ENCODE measurements at regions of chrX and their contacts with region 1.

Region 1: GRCh38 chrX:54044126-54044876 is at the start of gene PHF8:
- DNase-seq: peak; percentile 91
- H3K4me3 Mint-ChIP-seq: peak within 1 kb of the TSS; percentile 92
- H3K27ac Mint-ChIP-seq: peak within 1 kb of the TSS; percentile 98
- H3K4me1 Mint-ChIP-seq: peaks cover 18% of the 10 kb centered on the region
- H3K27me3 Mint-ChIP-seq: no peaks in the 10 kb centered on the region
- total RNA-seq, gene PHF8: 50.7 and 54.8 TPM in 2 replicates

Region 2: GRCh38 chrX:53422086-53422860 is 622.0 kb before region 1 on chrX and contains the start of gene SMC1A:
- intact Hi-C with region 1: loop called (anchors 1 kb)
- DNase-seq: peak; percentile 93
- H3K4me3 Mint-ChIP-seq: peak within 1 kb of the TSS; percentile 97
- H3K27ac Mint-ChIP-seq: peak within 1 kb of the TSS; percentile 95
- H3K4me1 Mint-ChIP-seq: peaks cover 35% of the 10 kb centered on the region
- H3K27me3 Mint-ChIP-seq: no peaks in the 10 kb centered on the region
- total RNA-seq, gene SMC1A: 122 and 138 TPM in 2 replicates

Region 3: DNA sequence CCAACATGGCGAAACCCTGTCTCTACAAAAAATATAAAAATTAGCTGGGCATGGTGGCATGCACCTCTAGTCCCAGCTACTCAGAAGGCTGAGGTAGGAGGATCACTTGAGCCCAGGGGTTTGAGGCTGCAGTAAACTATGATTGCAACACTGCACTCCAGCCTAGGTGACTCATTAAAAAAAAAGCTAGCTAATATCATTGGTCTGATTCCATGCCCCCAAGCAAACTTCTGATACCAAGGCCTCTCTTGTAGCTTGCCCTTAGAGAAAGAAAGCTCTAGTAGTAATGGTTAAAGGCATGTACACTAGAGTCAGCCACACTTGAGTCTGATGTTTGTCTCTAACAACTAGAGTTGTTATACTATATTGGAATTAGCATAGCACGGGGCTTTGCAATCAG is 32.6 kb after region 1 on chrX:
- intact Hi-C with region 1: no loop called
- DNase-seq: no peak
- H3K4me3 Mint-ChIP-seq: no peak overlapping the region
- H3K27ac Mint-ChIP-seq: no peak overlapping the region
- H3K4me1 Mint-ChIP-seq: no peaks in the 10 kb centered on the region
- H3K27me3 Mint-ChIP-seq: no peaks in the 10 kb centered on the region

Region 4: DNA sequence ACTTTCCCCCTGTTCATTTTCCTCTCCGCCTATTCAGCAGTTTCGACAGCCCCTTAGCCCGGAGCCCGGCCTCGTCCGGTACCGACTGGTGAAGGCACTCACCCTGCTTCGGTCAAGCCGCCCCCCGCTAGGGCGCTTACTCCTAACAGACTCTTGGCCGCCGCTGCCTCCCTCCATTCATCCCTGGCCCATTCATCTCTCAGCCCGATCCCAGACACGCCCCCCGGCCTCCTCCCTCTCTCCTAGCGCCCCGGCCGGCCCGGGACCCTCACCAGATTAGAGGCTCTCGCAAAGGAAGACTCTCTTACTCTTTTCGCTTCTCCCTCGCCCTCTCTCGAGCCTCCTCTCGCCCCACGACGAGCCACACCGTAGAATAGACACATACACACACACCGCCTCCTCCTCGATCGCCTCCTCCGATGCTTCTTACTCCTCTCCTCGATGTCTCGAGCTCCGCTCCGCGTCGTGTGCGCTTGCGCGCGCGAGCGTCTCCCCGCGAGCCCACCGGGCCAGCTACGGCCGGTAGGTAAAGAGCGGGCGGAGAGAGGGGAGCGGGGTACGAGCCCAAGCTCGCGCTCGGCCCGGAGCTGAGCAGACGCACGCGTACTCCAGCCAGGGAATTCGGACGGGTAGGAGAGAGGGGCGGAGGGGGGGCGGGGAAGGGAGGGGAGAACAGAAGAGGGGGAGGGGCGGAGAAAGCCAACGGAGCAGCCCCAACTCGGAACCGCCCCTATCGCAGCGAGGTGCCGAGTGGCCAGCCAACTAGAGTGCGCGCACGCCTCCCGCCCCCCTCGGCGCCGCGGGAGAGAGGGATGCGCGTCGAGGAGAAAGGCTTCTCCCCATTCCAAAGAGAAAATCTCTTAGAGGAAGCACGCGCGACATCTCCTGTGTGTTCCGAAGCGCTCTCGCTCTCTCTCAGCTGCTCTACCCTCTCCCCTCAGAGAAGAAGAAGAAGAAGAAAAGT is 313.4 kb after region 1 on chrX and contains the start of gene WNK3:
- intact Hi-C with region 1: loop called (anchors 10 kb)
- DNase-seq: peak; percentile 1
- H3K4me3 Mint-ChIP-seq: peak within 1 kb of the TSS; percentile 83
- H3K27ac Mint-ChIP-seq: no peak within 1 kb of the TSS
- H3K4me1 Mint-ChIP-seq: peaks cover 13% of the 10 kb centered on the region
- H3K27me3 Mint-ChIP-seq: peaks cover 36% of the 10 kb centered on the region
- total RNA-seq, gene WNK3: 0.02 and 0.16 TPM in 2 replicates

Region 5: DNA sequence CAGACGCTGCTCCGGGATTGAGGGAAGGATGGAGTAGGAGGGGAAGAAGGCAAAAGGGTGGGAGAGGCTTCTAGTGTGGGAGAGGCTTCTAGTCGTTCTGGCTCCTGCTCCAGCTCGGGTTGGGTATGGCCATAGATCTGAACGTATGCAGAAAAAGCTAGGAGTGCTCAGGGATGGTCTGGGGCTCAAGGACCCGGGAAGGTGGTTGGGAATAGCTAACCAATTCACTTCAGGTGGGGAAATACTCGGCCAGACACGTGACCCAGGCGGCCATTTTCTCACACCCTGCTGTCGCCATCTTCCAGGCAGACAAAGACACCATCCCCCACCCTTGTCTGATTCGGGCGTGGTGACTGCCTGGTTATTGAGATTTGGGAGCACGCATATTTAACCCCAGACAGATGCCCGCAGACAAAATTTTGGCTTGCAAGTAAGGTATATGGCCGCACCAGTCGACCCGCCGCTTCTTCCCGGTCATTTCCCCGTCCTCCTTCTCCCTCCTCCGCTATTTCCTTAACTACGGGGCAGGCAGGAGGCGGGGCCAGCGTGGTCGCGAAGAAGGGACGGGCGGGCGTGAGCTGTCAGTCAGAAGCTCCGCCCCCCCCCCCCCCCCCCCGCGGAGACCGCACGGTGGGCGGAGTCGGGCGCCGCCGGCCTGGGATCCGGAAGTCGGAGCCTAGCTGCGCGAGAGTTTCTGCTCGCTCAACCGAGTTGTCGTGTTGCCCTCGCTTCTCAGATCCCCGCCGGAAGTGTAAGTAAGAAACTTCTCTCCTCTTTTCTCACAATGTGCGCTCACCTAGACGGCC is 485.5 kb after region 1 on chrX and contains the start of gene GNL3L:
- intact Hi-C with region 1: loop called (anchors 1 kb)
- DNase-seq: peak; percentile 69
- H3K4me3 Mint-ChIP-seq: peak within 1 kb of the TSS; percentile 95
- H3K27ac Mint-ChIP-seq: peak within 1 kb of the TSS; percentile 94
- H3K4me1 Mint-ChIP-seq: peaks cover 26% of the 10 kb centered on the region
- H3K27me3 Mint-ChIP-seq: no peaks in the 10 kb centered on the region
- total RNA-seq, gene GNL3L: 75.5 and 76.1 TPM in 2 replicates

Region 6: DNA sequence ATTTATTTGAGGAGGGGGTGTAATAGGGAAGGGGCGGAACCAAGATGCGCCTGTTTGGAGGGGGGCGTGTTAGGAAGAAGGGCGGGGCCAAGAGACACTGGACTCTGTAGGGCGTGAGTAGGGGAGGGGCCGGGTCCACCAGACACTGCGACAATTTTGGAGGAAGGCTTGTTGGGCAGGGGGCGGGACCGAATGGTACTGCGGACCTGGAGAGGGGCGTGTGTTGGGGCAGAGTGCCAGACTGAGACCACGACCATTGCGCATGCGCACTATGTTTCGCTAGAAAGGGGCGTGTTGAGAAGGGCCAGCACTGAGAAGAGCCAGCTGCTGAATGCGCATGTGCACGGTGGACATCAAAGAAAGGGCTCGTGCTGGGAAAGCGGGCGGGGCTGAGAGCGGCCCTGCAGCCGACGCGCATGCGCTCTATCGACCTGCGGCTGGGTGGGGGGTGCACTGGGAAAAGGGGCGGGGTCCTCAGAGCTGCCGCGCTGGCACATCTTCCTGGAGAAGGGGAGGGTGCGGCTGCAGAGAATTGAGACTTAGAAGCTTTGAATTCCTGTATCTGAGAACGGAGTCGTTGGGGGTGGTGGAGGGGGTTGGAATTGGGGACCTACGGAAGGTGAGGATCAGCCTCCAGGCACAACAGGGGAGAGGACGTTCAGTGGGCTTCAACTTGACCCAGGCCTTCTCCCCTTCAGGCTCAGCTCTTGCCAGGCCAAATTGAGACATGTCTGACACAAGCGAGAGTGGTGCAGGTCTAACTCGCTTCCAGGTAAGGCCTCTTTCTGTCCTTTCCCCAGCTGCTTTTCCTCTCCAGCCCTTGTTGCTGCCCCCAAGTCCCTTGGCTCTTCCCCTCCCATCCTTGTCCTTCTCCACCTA is 764.5 kb after region 1 on chrX:
- intact Hi-C with region 1: loop called (anchors 2 kb)
- DNase-seq: peak; percentile 88
- H3K4me3 Mint-ChIP-seq: peak overlapping the region; percentile 89
- H3K27ac Mint-ChIP-seq: peak overlapping the region; percentile 85
- H3K4me1 Mint-ChIP-seq: peaks cover 17% of the 10 kb centered on the region
- H3K27me3 Mint-ChIP-seq: peaks cover 10% of the 10 kb centered on the region

Measured in activated T-helper 1 cell treated with anti-CD3 and anti-CD28 coated beads, Interleukin-12 subunit alpha, Interleukin-12 subunit beta, Interleukin-2, Interleukin-4 antibody, amounts not matched to agents 30 ng/mL and 10 ng/mL and 1 ng/mL, durations not matched to agents 14 hours and 24 hours and 36 hours (primary cell).